Activated CD4-positive, alpha-beta T cell treated with anti-CD3 and anti-CD28 coated beads, Interleukin-2, amount 10 ng/mL, durations not matched to agents 24 days and 14 days (primary cell): ENCODE measurements at regions of chr3 and their contacts with region 1.

Region 1: DNA sequence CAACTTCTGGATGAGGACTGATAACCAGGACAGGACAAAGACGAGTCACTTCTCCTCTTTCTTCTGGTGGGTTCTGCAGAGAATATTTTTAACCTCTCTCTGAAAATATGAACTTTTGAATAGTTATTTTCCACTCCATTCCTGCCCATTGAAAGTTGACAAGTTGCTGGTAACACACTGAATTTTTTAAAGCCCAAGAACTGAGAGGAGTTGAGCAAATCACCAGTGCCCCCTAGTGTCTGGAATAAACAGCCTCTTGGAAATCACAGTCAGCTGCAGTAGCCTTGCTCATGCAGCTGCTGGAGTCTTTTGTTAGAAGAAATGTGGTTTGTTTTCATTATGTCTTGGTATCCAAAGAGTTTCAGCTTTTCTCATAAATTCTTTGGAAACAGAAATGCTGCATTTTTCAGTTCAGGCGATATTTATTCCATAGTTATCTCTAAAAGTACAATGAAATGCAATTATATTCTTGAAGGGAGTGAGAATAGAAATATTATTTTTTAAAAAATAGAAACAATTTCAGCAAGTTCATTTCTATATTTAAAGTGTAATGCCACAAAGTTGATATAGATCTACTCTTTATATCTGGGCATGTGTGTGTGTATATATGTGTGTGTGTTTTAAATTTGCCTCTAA is 741.0 kb upstream of the CBLB start:
- DNase-seq: peak; percentile 90
- H3K4me3 Mint-ChIP-seq: no peak overlapping the region
- H3K27ac Mint-ChIP-seq: peak overlapping the region; percentile 83
- H3K4me1 Mint-ChIP-seq: peaks cover 24% of the 10 kb centered on the region
- H3K27me3 Mint-ChIP-seq: no peaks in the 10 kb centered on the region

Region 2: DNA sequence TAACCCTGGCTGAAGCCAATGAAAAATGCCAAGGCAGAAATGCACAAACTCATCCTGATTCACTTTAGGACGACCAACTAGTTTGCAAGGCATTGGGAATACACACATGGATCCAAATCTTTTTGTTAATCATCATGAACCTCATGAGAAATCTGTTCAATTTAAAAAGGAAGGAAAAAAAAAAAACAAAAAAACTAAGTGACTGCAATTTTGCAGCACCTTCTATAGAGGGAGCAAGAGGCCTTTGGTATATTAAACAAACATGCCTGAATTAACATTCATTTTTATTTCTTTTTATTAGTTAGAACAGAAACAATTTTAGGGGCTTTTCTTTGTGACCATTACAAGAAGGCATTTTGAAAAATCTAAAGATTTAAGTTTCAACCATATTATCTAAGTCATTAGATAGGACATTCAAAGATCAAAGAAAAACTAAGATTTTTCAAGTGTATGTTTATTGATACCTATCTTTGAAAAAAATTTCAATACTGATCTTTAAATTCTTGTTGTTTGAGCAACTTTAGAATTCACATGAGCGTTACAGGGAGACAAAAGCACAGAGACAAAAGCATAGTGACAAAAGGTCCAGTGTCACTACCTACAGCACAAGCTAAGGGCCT is 923.4 kb before region 1 on chr3:
- intact Hi-C with region 1: loop called (anchors 2 kb)
- DNase-seq: peak; percentile 53
- H3K4me3 Mint-ChIP-seq: no peak overlapping the region
- H3K27ac Mint-ChIP-seq: peak overlapping the region; percentile 67
- H3K4me1 Mint-ChIP-seq: peaks cover 18% of the 10 kb centered on the region
- H3K27me3 Mint-ChIP-seq: no peaks in the 10 kb centered on the region

Region 3: DNA sequence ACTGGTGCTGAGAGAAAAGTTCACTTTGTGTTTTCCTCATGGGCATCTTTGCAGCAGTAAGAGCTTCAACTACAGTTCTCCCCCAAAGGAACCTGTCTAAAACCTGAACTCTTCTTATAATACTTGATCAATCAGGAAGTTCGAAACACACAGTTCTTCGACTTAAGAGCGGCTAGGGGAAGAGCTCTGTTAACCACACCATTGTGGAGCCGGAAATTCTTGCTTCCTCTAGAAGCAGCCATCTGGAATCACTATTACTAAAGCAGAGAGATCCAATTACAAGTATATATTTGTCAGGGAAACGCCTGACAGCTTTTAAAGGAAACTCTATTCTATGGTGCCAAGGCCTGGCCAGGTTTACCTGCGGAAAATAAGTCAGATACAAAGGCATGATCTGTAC is 403.6 kb before region 1 on chr3:
- intact Hi-C with region 1: loop called (anchors 2 kb)
- DNase-seq: peak; percentile 75
- H3K4me3 Mint-ChIP-seq: peak overlapping the region; percentile 65
- H3K27ac Mint-ChIP-seq: peak overlapping the region; percentile 97
- H3K4me1 Mint-ChIP-seq: peaks cover 39% of the 10 kb centered on the region
- H3K27me3 Mint-ChIP-seq: no peaks in the 10 kb centered on the region

Region 4: GRCh38 chr3:106534206-106534605 is 75.6 kb before region 1 on chr3:
- intact Hi-C with region 1: loop called (anchors 10 kb)
- DNase-seq: peak; percentile 81
- H3K4me3 Mint-ChIP-seq: no peak overlapping the region
- H3K27ac Mint-ChIP-seq: peak overlapping the region; percentile 81
- H3K4me1 Mint-ChIP-seq: peaks cover 17% of the 10 kb centered on the region
- H3K27me3 Mint-ChIP-seq: no peaks in the 10 kb centered on the region

Region 5: GRCh38 chr3:107064445-107065060 is 454.8 kb after region 1 on chr3:
- intact Hi-C with region 1: loop called (anchors 10 kb)
- DNase-seq: peak; percentile 89
- H3K4me3 Mint-ChIP-seq: no peak overlapping the region
- H3K27ac Mint-ChIP-seq: no peak overlapping the region
- H3K4me1 Mint-ChIP-seq: peaks cover 17% of the 10 kb centered on the region
- H3K27me3 Mint-ChIP-seq: peaks cover 8% of the 10 kb centered on the region